A549 (cell line): ENCODE measurements at regions of chr16 and their contacts with region 1.

Region 1: DNA sequence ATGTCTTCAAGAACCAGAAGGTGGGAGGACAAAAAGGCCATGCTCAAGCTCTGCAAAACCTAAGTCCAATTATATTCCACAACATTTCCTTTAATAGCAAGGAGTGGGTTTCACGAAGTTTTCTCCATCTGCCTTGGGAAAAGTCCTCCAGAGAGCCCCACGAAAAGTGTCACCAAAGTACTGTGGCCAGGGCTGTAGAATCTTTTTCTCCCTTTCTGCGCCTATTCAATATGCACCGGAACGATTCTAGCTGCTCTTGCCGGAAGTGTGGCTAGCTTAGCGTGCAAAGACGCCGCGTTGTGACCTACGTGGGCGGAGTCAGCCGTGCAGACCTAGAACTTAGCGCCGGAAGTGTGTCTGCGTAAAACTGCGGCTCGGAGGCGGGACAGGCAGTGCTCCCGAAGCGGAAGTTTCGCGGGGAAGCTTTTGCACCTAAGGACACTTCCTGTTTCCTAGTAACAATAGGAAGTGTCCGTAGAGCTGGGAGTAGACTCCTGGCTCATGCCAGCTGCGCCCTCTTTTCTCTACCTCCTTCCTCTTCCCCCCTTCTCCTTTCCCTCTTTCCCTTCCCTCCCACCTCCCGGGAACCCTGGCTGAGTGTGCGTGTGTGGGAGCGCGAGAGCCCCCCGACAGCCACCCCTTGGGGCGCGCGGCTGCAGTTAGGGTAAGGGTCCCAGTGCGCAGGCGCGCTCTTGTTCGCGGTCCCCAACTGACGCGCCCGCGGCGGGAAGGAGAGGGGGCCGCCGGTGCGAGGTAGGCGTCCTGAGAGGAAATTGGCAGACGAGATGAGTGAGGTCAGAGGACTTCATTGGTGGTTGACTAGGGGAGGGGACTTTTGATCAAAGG is at the starts of genes ZNF646 and ZNF668:
- DNase-seq: peak; percentile 99 to 100
- ATAC-seq: peak; percentile 91 to 92
- H3K4me3 ChIP-seq: peak within 1 kb of the TSS; percentile 90
- H3K27ac ChIP-seq: peak within 1 kb of the TSS; percentile 98
- H3K4me1 ChIP-seq: peaks cover 19% of the 10 kb centered on the region
- CTCF ChIP-seq: no peak
- EP300 ChIP-seq: no peak
- POLR2A ChIP-seq: peak; percentile 69
- RAD21 ChIP-seq: no peak
- polyA plus RNA-seq, gene ZNF646: 3.0 and 4.3 TPM in 2 replicates
- polyA plus RNA-seq, gene ZNF668: 3.9 and 4.7 TPM in 2 replicates

Region 2: GRCh38 chr16:31010585-31011325 is 63.4 kb before region 1 on chr16 and contains the start of gene STX1B:
- CTCF ChIA-PET with region 1: no interaction called
- POLR2A ChIA-PET with region 1: no interaction called
- DNase-seq: no peak
- ATAC-seq: no peak
- H3K4me3 ChIP-seq: no peak within 1 kb of the TSS
- H3K27ac ChIP-seq: peak within 1 kb of the TSS in 1 of 2 experiments; percentile 77; a peak in 3 of 6 replicates
- H3K4me1 ChIP-seq: peaks cover 5% of the 10 kb centered on the region; the same call in 1 of the 3 replicates
- CTCF ChIP-seq: no peak
- EP300 ChIP-seq: no peak
- POLR2A ChIP-seq: no peak
- RAD21 ChIP-seq: no peak
- polyA plus RNA-seq, gene STX1B: 2.6 and 2.7 TPM in 2 replicates

Region 3: DNA sequence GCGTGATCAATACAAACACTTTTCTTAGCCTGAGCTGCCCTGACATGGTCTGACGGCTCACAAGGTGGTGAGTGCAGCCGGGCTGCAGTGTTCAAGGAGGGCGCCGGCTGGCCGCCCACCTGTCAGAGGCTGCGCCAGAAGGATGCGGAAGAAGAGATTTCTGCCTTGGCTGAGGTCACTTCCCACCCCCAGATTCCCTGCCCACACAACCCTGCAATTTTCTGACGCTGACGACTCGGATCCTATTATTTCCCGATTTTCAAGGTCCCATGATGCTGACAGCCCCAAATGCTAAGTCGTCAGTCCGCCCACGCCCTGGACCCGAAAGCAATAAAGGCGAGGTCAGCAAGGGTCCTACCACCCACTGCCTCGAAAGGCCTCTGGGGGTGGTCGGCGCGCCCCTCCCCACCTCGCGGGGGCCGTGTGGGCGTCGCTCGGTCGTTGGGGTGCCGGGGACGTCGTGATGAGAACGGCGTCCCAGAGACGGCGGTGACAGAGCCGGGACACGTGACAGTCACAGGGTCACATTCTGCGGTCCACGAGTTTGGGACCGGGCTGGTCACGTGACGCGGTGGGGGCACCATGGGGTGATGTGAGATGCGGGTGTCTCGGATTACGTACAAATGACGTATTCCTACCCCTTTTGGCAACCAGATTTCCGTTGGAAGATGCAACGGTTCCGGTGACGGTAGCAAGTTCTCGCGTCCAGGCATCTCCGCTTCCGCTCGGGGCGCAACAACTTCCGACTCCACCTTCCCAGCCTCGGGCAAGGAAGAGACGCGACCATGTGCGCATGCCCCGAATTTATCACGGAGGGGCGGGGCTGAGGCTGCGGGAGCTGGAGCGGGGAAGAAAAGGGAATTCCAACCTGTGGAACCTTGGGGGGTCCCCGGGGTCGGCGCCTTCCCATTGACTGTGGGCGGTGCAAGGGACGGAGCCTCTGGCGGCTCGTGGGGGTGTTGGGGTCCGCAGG is 41.2 kb before region 1 on chr16 and contains the start of gene STX4:
- CTCF ChIA-PET with region 1: no interaction called
- POLR2A ChIA-PET with region 1: interaction called, 19 read pairs
- DNase-seq: peak; percentile 91 to 97
- ATAC-seq: peak; percentile 89 to 90
- H3K4me3 ChIP-seq: peak within 1 kb of the TSS; percentile 72
- H3K27ac ChIP-seq: peak within 1 kb of the TSS; percentile 85 to 95
- H3K4me1 ChIP-seq: peaks cover 8% of the 10 kb centered on the region; the same call in 1 of the 3 replicates
- CTCF ChIP-seq: no peak
- EP300 ChIP-seq: no peak
- POLR2A ChIP-seq: no peak; the same call in 1 of the 2 replicates
- RAD21 ChIP-seq: no peak
- polyA plus RNA-seq, gene STX4: 37.0 and 39.7 TPM in 2 replicates

Region 4: GRCh38 chr16:31084616-31085260 is 10.5 kb after region 1 on chr16:
- CTCF ChIA-PET with region 1: interaction called, 3 read pairs
- POLR2A ChIA-PET with region 1: interaction called, 10 read pairs
- DNase-seq: no peak
- ATAC-seq: peak; percentile 12 to 18; a peak in 3 of 6 replicates
- H3K4me3 ChIP-seq: no peak overlapping the region
- H3K27ac ChIP-seq: no peak overlapping the region
- H3K4me1 ChIP-seq: no peaks in the 10 kb centered on the region
- CTCF ChIP-seq: no peak
- EP300 ChIP-seq: no peak
- POLR2A ChIP-seq: no peak
- RAD21 ChIP-seq: no peak

Region 5: DNA sequence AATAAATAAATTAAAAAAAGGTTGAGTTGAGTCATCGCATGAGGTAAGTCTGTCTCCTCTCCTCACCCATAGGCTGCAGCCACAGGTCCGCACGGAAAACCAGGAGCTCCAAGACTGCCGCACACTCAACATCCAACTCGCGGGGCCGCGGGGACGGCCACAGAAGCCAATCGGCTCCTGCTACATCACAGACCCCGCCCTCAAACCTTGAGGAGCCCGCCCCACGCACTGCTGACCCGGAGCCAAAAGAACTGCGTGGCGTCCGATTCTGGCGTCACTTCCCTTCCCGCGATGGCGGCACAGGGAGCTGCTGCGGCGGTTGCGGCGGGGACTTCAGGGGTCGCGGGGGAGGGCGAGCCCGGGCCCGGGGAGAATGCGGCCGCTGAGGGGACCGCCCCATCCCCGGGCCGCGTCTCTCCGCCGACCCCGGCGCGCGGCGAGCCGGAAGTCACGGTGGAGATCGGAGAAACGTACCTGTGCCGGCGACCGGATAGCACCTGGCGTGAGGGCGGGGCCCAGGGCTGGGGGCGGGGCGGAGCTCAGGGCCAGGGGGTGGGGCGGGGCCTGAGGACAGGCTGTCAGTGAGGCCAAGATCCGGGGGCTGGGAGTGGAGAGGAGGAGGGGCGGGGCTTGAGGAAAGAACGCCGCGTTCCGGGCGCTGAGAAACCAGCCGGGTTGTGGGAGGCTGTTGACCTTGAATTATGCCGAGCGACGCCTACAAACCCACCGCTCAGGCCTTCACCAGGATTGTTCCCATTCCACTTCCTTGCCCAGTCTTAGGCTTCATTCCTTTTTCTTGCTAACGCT is 43.4 kb after region 1 on chr16 and contains the start of gene KAT8:
- CTCF ChIA-PET with region 1: interaction called, 3 read pairs
- POLR2A ChIA-PET with region 1: interaction called, 32 read pairs
- DNase-seq: peak; percentile 96 to 98
- ATAC-seq: peak; percentile 96 to 97
- H3K4me3 ChIP-seq: peak within 1 kb of the TSS; percentile 57
- H3K27ac ChIP-seq: peak within 1 kb of the TSS; percentile 91 to 93
- H3K4me1 ChIP-seq: peaks cover 17% of the 10 kb centered on the region
- CTCF ChIP-seq: no peak
- EP300 ChIP-seq: no peak
- POLR2A ChIP-seq: peak; percentile 65
- RAD21 ChIP-seq: 0 out of 5 replicates have a peak, but pooled peaks of 1 of the 2 experiments have one; percentile 20
- polyA plus RNA-seq, gene KAT8: 42.2 and 52.9 TPM in 2 replicates

Region 6: DNA sequence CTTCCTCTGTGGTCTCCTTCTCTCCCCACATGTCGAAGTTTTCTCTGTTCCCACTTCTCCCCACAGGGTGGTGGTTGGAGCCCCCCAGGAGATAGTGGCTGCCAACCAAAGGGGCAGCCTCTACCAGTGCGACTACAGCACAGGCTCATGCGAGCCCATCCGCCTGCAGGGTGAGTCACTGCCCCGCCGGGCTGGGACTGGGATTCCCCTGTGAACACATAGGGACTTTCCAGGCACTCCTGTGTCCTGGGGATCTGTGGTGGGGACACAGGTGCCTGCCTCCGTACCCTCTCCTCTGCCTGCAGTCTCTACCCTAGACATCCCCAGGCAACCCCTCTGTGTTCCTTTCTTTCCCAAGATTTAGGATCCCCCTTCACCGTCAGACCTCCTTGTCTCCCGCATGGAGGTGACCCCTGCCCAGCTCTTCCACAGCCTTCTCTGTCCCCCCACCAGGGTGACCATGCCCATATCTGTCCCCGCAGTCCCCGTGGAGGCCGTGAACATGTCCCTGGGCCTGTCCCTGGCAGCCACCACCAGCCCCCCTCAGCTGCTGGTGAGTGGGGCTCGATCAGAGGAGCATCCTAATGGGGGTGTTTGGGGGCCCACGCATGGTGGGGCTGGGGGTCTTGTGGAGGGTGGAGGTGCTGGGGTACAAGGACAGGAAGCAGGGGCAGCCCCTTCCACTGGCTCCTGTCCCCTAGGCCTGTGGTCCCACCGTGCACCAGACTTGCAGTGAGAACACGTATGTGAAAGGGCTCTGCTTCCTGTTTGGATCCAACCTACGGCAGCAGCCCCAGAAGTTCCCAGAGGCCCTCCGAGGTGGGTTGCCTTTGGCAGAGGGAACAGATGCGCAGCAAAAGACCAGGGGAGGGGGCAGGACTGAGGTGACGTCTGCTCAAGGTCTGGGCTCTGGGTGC is 191.4 kb after region 1 on chr16:
- CTCF ChIA-PET with region 1: no interaction called
- POLR2A ChIA-PET with region 1: no interaction called
- DNase-seq: peak; percentile 85 to 95
- ATAC-seq: peak; percentile 98 to 99
- H3K4me3 ChIP-seq: no peak overlapping the region
- H3K27ac ChIP-seq: peak overlapping the region; percentile 74 to 90
- H3K4me1 ChIP-seq: peaks cover 30% of the 10 kb centered on the region
- CTCF ChIP-seq: no peak
- EP300 ChIP-seq: peak in 1 of 2 experiments; percentile 42; a peak in 1 of 5 replicates
- POLR2A ChIP-seq: no peak
- RAD21 ChIP-seq: peak; percentile 33 to 35; a peak in 3 of 5 replicates